ENCODE measurements at regions of chr15 and their contacts with region 1.

Region 1: DNA sequence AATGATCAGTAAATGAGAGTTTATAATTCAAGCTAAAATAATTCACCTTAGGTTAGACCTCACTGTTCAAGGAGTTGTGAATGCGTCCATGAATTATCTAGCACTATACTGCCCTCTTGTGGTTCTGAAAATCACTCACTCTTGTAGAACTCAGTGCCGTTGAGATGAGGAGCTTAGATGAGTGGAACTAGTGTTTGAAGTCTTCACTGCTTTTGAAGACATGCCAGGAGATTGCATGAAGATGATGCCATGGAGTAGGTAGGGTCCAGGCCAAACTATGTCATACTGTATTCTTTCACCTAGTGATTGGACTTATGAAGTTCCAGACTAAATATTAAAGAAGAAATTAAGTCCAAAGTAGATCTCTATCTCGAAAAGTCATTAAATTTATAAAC is 28.8 kb downstream of the LYSMD4 start:
- DNase-seq: peak; percentile 57
- H3K4me3 ChIP-seq: no peak overlapping the region
- H3K27me3 ChIP-seq: no peaks in the 10 kb centered on the region
- CTCF ChIP-seq: peak; percentile 64

Region 2: GRCh38 chr15:99275525-99276128 is 428.8 kb before region 1 on chr15:
- CTCF ChIA-PET with region 1: interaction called, 29 read pairs
- POLR2A ChIA-PET with region 1: no interaction called
- DNase-seq: no peak
- H3K4me3 ChIP-seq: no peak overlapping the region
- H3K27me3 ChIP-seq: no peaks in the 10 kb centered on the region
- CTCF ChIP-seq: no peak

Region 3: DNA sequence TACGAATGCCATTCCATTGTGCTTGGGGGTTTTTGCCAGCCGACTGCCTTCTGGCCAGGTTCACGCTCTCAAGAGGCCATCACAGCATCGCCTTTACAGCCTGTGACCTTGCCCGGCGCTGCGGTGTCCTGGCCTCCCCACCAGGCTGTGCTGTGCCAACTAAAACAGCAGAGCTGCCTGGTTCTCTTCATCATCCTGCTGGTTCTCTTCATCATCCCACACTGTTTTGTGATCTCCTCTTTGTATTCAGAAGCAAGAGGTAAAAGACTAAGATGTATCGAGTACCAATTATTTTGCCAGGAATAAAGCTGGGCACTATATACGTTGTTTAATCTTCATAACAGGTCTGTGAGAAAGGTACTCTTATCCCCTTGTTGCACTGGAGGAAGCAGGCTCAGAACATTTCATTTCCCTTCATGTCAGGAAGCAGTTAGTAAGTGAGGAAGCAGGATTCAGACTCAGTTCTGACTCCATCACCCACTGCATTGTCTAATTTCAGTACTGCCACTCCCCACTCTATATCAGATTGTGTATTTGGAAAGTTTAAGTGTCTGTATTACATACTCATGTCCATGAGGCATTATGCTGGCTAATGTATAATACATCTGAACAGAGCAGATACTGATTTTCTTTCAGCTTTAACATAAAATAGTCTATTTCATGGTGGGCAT is 360.4 kb before region 1 on chr15:
- CTCF ChIA-PET with region 1: interaction called, 10 read pairs
- POLR2A ChIA-PET with region 1: no interaction called
- DNase-seq: no peak
- H3K4me3 ChIP-seq: no peak overlapping the region
- H3K27me3 ChIP-seq: no peaks in the 10 kb centered on the region
- CTCF ChIP-seq: no peak

Region 4: DNA sequence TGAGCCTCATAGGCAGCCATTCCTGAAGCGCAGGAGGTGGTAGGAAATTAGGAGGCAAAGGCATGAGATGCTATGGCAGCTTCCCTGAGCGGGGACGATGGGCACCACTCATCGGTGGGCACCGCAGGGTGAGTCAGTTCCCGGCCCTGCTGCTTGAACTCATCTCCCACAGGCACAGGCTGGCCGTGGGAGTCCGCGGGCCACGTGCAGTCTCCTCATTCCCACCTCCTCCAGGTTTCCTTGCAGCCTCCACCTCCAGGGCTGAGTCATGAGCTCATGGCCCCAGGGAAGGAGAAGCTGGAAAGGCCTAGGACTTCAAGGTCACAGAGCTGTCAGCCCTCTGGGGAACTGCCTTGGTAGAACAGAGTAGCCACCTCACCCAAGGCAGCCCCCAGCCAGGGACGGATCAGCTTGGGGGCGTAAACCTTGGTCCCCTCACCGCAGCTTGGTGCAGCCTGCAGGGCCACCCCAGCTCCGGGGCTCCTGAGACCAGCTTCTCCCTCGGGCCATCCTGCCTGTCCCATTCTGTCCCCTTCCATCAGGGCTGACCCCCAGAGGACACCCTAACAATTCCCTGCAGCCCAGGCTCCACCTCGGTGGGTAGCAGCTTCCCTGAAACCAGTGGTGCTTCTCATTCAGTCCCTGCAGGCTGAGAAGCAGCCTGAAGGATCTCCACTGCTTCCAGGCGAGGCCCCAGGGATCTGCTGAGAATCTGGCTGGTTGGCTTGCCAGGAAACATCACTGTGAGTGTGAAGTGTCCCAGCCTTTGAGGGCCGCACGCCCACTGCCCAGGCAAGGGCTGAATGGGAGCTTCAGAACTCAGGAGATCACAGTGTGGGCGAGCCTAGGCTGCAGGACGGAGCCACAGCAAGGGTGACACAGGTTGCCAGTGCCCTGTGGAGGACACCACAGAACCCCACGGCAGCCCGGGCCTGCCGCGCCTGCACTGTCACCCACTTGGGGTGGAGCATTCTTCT is 289.4 kb before region 1 on chr15:
- CTCF ChIA-PET with region 1: interaction called, 31 read pairs
- POLR2A ChIA-PET with region 1: no interaction called
- DNase-seq: no peak
- H3K4me3 ChIP-seq: no peak overlapping the region
- H3K27me3 ChIP-seq: no peaks in the 10 kb centered on the region
- CTCF ChIP-seq: no peak

Region 5: GRCh38 chr15:99485153-99485961 is 219.1 kb before region 1 on chr15:
- CTCF ChIA-PET with region 1: interaction called, 10 read pairs
- POLR2A ChIA-PET with region 1: no interaction called
- DNase-seq: no peak
- H3K4me3 ChIP-seq: no peak overlapping the region
- H3K27me3 ChIP-seq: peaks cover 3% of the 10 kb centered on the region; the same call in 1 of the 2 replicates
- CTCF ChIP-seq: no peak

Region 6: DNA sequence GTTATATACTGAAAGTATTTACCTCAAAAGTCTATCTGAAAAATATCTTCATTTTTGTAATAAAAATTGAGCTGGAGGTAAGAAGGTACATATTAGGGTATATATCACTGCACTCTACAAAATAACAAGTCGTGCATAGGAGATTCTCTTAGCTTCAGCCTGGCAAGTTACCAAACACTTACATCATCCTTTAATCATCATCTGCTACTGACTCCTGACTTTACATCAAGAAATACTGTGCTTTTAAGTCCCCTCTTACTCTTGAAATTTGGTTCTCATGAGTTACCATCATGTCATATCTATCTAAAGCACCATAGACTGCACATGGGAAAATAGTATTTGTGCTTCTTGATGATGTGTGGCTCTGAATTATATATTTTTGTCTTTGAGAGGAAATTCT is 22.0 kb before region 1 on chr15:
- CTCF ChIA-PET with region 1: interaction called, 20 read pairs
- POLR2A ChIA-PET with region 1: no interaction called
- DNase-seq: peak; percentile 63
- H3K4me3 ChIP-seq: no peak overlapping the region
- H3K27me3 ChIP-seq: no peaks in the 10 kb centered on the region
- CTCF ChIP-seq: no peak

Region 7: DNA sequence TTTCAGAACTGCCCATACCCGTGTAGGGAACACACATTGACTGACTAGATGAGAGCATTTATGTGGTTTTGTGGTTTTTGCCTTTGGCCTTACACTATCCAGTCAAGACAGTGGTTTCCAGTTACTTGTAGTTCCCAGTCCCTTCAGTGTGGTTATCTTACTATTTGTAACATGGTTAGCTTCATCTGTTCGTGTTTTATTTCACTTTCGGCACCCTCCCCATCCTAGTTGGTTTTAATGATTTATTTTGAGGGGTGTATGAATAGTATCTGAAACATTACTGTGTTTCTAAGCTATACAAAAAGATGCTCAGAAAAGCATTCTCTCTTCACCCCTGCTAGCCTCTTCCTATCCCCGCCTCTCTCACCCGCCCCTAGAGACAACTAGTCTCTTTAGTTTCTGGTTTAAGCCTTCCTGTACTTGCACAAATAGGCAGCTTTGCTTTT is 14.7 kb after region 1 on chr15:
- CTCF ChIA-PET with region 1: interaction called, 18 read pairs
- POLR2A ChIA-PET with region 1: no interaction called
- DNase-seq: no peak
- H3K4me3 ChIP-seq: no peak overlapping the region
- H3K27me3 ChIP-seq: no peaks in the 10 kb centered on the region
- CTCF ChIP-seq: no peak

Region 8: GRCh38 chr15:99744142-99744541 is 39.7 kb after region 1 on chr15:
- CTCF ChIA-PET with region 1: no interaction called
- POLR2A ChIA-PET with region 1: no interaction called
- DNase-seq: no peak
- H3K4me3 ChIP-seq: no peak overlapping the region
- H3K27me3 ChIP-seq: peaks cover 3% of the 10 kb centered on the region; the same call in 1 of the 2 replicates
- CTCF ChIP-seq: no peak